ENCODE measurements at regions of chr7 and their contacts with region 1.

Region 1: GRCh38 chr7:141701489-141702046 is 398 bp downstream of the DENND11 start:
- DNase-seq: peak; percentile 74 to 88 (median 83)
- H3K4me3 ChIP-seq: peak overlapping the region; percentile 38
- H3K4me3 Mint-ChIP-seq: peak overlapping the region; percentile 87 to 93 (median 91)
- H3K27ac ChIP-seq: peak overlapping the region; percentile 53
- H3K27ac Mint-ChIP-seq: peak overlapping the region; percentile 81 to 97 (median 89)
- H3K4me1 ChIP-seq: peaks cover 34% of the 10 kb centered on the region
- H3K4me1 Mint-ChIP-seq: peaks cover 44 to 52% (median 50%) of the 10 kb centered on the region in 3 donors
- H3K27me3 ChIP-seq: no peaks in the 10 kb centered on the region
- H3K27me3 Mint-ChIP-seq: peaks cover 3 to 4% of the 10 kb centered on the region in 2 donors

Region 2: GRCh38 chr7:141737834-141738591 is 36.4 kb after region 1 on chr7 and contains the start of gene SSBP1:
- CTCF ChIA-PET with region 1: interaction called, 29 read pairs
- POLR2A ChIA-PET with region 1: interaction called, 22 read pairs
- DNase-seq: peak; percentile 80 to 93 (median 92)
- H3K4me3 ChIP-seq: peak within 1 kb of the TSS; percentile 76
- H3K4me3 Mint-ChIP-seq: peak within 1 kb of the TSS; percentile 93 to 99 (median 98)
- H3K27ac ChIP-seq: peak within 1 kb of the TSS; percentile 85
- H3K27ac Mint-ChIP-seq: peak within 1 kb of the TSS; percentile 88 to 99 (median 98)
- H3K4me1 ChIP-seq: peaks cover 33% of the 10 kb centered on the region
- H3K4me1 Mint-ChIP-seq: peaks cover 42 to 66% (median 63%) of the 10 kb centered on the region in 3 donors
- H3K27me3 ChIP-seq: no peaks in the 10 kb centered on the region
- H3K27me3 Mint-ChIP-seq: no peaks in the 10 kb centered on the region
- total RNA-seq, gene SSBP1: 284 to 291 TPM

Region 3: DNA sequence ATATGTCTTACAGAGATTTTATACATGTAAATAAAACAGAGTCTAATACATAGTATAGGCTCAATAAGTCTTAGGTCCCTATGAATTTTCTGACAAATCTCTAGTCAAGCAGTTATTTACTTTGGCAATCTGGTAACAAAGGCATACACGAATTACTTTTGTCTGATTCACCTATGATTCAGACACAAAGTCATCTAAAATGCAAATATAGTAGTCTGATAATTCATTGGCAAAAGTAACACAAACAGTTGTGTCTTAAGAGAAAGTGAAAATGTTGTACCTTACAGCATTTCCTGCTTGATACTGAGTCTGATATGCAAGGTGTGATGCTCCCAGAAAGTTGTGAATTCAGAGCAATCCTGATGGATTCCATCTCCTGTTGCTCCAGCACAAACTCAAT is 838.3 kb after region 1 on chr7:
- CTCF ChIA-PET with region 1: no interaction called
- POLR2A ChIA-PET with region 1: no interaction called
- DNase-seq: no peak
- H3K4me3 ChIP-seq: no peak overlapping the region
- H3K4me3 Mint-ChIP-seq: peak overlapping the region in 1 of 7 donors; percentile 28
- H3K27ac ChIP-seq: no peak overlapping the region
- H3K27ac Mint-ChIP-seq: peak overlapping the region in 3 of 8 donors; percentile 4 to 81 (median 23)
- H3K4me1 ChIP-seq: peaks cover 9% of the 10 kb centered on the region
- H3K4me1 Mint-ChIP-seq: peaks cover 11 to 26% (median 23%) of the 10 kb centered on the region in 3 donors
- H3K27me3 ChIP-seq: no peaks in the 10 kb centered on the region
- H3K27me3 Mint-ChIP-seq: peaks cover under 1 to 1% of the 10 kb centered on the region in 2 donors

Measured in CD8-positive, alpha-beta memory T cell (primary cell).